Psoas muscle (tissue), 8 donors: ENCODE measurements at regions of chr3 and their contacts with region 1.

Region 1: DNA sequence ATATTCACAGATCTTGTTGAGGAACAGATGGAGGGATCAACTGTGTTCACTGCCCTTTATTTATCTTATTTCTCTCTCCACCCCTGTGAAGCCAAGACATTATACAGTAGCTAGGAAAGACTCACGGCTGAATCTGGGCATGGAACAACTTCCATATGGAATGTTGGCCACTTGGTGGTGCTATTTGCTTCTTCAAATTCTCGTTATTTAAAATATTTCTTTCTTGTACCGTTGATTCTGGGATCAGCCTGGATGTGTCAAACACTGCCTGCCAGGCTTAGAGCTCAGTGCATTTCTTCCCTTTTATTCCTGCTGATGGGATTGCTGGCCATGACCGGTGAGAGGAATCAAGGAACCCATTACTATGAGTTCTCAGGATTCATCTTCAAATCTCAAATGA is 17.5 kb upstream of the GASK1A start:
- DNase-seq: no peak
- ATAC-seq: peak; percentile 57 to 93 (median 78)
- H3K4me3 ChIP-seq: no peak overlapping the region
- H3K27ac ChIP-seq: no peak overlapping the region
- H3K4me1 ChIP-seq: no peaks in the 10 kb centered on the region
- H3K27me3 ChIP-seq: no peaks in the 10 kb centered on the region
- CTCF ChIP-seq: peak; percentile 69

Region 2: DNA sequence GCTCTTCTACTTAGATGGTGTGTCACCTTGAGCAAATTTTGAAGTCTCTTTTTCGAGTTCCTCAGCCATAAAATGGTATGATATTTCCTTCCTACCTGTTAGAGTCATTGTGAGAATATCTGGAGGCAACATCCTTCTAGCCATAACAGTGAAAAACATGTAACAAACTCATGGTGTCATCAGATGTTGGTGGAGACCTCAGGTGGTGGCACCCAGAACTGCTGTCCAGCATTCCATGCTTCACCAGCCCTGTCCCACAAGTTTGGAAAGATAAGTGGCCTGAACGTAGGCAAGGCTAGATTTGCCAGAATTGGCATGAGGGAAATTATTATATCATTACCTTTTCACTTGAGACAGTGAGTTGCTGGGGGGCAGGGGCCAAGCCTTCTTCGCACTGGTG is 47.9 kb after region 1 on chr3:
- intact Hi-C with region 1: loop called in 1 of 2 experiments (anchors 2 kb)
- DNase-seq: no peak
- ATAC-seq: peak in 3 of 4 donors; percentile 71 to 81 (median 79)
- H3K4me3 ChIP-seq: no peak overlapping the region
- H3K27ac ChIP-seq: no peak overlapping the region
- H3K4me1 ChIP-seq: no peaks in the 10 kb centered on the region
- H3K27me3 ChIP-seq: no peaks in the 10 kb centered on the region
- CTCF ChIP-seq: no peak

Region 3: DNA sequence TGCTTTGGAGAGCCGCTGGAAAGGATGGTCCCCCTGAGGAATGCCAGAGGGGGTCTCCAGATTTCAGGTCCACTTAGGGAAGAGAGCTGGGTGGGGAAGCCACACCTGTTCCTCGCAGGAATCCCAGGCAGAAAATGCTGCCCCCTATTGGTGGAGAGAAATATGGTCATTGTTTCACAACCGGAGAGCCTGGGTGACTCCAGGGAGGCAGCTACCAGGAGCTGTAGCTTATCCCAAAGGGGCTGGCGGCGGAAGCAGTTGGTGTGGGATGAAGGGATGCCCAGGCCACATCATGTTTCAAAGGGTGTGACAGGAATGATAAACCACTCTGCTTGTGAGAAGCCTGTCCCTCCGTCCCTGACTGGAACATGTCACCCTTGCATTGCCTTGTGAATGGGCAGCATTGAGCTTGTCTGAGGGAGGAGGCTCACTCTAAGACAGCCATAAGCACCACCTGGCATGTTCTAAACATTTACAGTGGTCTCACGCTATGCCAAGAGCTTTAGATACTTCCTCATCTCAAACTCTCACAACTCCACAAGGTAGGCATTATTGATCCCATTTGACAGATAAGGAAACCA is 109.8 kb after region 1 on chr3:
- intact Hi-C with region 1: loop called (anchors 10 kb)
- DNase-seq: no peak
- ATAC-seq: peak in 3 of 4 donors; percentile 30 to 77 (median 60)
- H3K4me3 ChIP-seq: no peak overlapping the region
- H3K27ac ChIP-seq: no peak overlapping the region
- H3K4me1 ChIP-seq: no peaks in the 10 kb centered on the region
- H3K27me3 ChIP-seq: no peaks in the 10 kb centered on the region
- CTCF ChIP-seq: peak; percentile 46

Region 4: GRCh38 chr3:43104660-43105595 is 143.3 kb after region 1 on chr3:
- intact Hi-C with region 1: loop called in 1 of 2 experiments (anchors 5 kb)
- DNase-seq: peak in 1 of 2 donors; percentile 56
- ATAC-seq: peak; percentile 13 to 53 (median 47)
- H3K4me3 ChIP-seq: peak overlapping the region; percentile 96
- H3K27ac ChIP-seq: peak overlapping the region; percentile 71
- H3K4me1 ChIP-seq: peaks cover 6% of the 10 kb centered on the region
- H3K27me3 ChIP-seq: no peaks in the 10 kb centered on the region
- CTCF ChIP-seq: no peak

Region 5: DNA sequence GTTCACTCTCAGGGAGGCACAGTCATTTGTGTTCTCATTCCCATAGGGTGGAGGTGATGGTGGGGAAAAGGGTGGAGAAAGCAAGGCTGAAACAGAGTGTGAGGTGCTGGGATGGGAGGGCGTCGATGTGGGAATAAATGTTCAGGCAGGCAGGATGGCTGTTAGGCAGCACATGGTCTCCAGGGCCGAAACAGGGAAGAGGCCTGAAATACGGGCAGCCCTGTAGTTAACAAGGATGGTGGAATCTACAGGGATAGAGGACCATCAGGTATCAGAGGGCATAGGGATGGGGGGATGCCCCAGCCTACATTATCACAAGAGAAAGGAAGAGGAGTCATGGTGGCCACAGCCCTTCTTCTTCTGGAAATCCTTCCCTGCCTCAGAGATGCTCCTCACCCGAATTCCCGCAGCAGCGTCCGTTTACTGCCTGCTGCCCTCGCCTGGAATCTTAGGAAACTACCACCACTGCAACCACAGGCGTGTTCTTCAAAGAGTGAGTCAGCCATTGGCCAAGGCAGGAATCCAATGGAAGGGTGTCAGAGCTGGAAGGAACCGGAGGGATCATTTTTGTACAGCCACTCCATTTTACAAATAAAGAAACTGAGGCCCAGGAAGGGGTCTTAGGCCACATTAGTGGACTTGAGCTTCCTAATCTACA is 194.0 kb after region 1 on chr3:
- intact Hi-C with region 1: loop called (anchors 5 to 10 kb)
- DNase-seq: peak; percentile 67 to 77
- ATAC-seq: peak; percentile 63 to 84 (median 78)
- H3K4me3 ChIP-seq: no peak overlapping the region
- H3K27ac ChIP-seq: no peak overlapping the region
- H3K4me1 ChIP-seq: peaks cover 6% of the 10 kb centered on the region
- H3K27me3 ChIP-seq: peaks cover 0 to 4% (median 0%) of the 10 kb centered on the region in 3 donors
- CTCF ChIP-seq: peak; percentile 45

Region 6: GRCh38 chr3:43503067-43503728 is 541.6 kb after region 1 on chr3:
- intact Hi-C with region 1: loop called (anchors 10 kb)
- DNase-seq: no peak
- ATAC-seq: peak in 1 of 4 donors; percentile 74
- H3K4me3 ChIP-seq: no peak overlapping the region
- H3K27ac ChIP-seq: no peak overlapping the region
- H3K4me1 ChIP-seq: no peaks in the 10 kb centered on the region
- H3K27me3 ChIP-seq: no peaks in the 10 kb centered on the region
- CTCF ChIP-seq: peak; percentile 56